Right cardiac atrium (tissue), 5 donors: ENCODE measurements at regions of chr17 and their contacts with region 1.

Region 1: DNA sequence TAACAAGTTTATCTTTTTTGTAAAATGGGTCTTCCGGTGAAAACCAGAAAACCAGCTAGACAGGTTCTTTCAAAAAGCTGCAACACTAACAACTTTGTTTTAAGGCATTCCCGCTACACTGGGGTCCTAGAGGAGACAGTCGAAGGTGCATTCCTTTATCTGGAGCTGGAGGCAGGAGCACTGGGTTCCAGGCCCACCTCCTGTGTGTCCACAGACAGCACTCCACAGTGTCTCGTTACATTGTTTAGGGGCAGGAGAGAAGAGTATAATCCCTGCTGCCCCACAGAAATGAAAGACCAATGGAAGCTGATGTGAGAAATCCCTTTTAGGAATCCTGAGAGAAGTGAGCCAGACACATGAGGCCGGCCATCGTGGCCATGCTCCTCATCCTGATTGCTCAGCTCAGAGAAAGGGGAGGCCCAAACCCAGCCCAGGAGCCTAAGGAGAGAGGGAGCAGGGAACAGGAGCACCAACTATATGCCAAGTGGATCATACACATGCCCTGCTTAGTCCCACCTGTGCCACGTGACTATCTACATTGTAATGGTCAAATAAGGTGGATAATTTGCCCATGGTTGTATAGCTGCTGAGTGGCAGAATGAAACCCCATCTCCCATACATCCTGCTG is 59.5 kb downstream of the CCDC182 start:
- DNase-seq: no peak
- ATAC-seq: no peak
- H3K4me3 ChIP-seq: no peak overlapping the region
- H3K27ac ChIP-seq: no peak overlapping the region
- H3K4me1 ChIP-seq: no peaks in the 10 kb centered on the region
- H3K27me3 ChIP-seq: no peaks in the 10 kb centered on the region

Region 2: GRCh38 chr17:57234751-57235117 is 450.9 kb before region 1 on chr17:
- intact Hi-C with region 1: loop called in 1 of 4 experiments (anchors 10 kb)
- DNase-seq: no peak
- ATAC-seq: no peak
- H3K4me3 ChIP-seq: no peak overlapping the region
- H3K27ac ChIP-seq: no peak overlapping the region
- H3K4me1 ChIP-seq: no peaks in the 10 kb centered on the region
- H3K27me3 ChIP-seq: no peaks in the 10 kb centered on the region

Region 3: DNA sequence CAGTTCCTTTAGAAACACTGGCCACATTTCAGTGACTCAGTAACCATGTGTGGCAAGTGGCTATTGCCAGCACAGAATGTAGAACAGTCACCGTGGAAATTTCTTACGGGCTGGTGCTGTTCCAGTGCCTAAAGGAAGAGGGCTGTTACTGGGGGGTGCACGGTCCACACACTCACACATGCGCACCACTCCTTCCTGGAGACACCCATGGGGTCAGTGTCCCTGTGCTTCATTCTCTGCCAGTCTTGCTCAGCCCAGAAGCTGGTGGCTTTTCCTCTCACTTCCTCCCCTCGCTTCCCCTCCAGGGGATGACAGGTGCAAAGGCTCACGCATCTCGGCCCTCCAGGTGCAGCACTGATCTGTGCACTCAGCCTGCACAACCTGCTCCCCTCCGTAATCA is 56.1 kb before region 1 on chr17:
- intact Hi-C with region 1: no loop called
- DNase-seq: no peak
- ATAC-seq: no peak
- H3K4me3 ChIP-seq: no peak overlapping the region
- H3K27ac ChIP-seq: no peak overlapping the region
- H3K4me1 ChIP-seq: no peaks in the 10 kb centered on the region
- H3K27me3 ChIP-seq: no peaks in the 10 kb centered on the region